ENCODE measurements at regions of chr17 and their contacts with region 1.

Region 1: DNA sequence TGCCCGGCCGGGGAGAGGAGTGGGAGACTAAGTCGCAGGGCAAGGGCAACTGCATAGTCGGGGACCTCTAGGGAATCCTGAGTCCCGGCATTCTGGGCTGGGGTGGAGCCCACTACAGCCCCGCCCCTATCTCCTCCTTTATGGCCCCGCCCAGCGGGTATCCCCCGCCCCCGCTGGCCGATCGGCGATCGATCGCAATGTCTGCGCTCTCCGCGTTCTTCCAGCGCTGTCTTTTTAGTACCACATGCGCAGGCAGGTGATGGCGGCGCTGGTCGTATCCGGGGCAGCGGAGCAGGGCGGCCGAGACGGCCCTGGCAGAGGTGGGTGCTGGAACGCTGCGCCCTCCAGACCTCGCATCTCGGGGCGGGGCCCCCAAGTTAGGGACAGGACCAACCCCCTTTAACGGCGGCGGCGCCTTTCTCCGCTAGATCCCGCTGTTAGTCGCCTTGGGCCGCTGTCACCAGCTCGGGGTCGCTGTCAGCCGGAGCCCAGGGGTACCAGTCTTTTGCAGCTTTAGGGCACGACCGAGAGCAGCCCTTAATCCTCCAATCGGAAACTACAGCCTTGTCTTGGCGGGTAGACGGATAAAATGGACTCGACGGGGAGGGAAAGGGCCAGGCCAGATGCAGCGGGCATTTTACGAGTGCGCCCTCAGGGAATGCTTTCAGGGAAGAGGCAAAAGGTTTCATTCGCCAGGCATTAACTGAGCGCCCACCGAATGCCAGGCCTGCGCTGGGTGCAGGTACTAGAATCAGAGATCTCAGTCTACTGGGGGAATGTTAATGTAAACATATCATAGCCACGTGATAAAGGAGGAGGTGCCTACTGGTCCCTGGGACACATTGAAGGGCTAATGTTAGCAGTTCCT is at the start of gene DPH1:
- DNase-seq: peak; percentile 82 to 96 (median 91)

Region 2: GRCh38 chr17:1908699-1909309 is 121.3 kb before region 1 on chr17:
- intact Hi-C with region 1: loop called (anchors 5 kb)
- DNase-seq: peak; percentile 29 to 88 (median 62)

Region 3: GRCh38 chr17:2101448-2102257 is 71.5 kb after region 1 on chr17:
- intact Hi-C with region 1: no loop called
- DNase-seq: no peak